ENCODE measurements at regions of chr10 and their contacts with region 1.

Region 1: GRCh38 chr10:13787015-13787421 is 200.3 kb downstream of the PRPF18 start:
- DNase-seq: peak in 2 of 10 donors; percentile 38 to 60
- H3K4me3 ChIP-seq: no peak overlapping the region
- H3K27ac ChIP-seq: peak overlapping the region in 24 of 59 donors; percentile 3 to 97 (median 60)
- H3K27me3 ChIP-seq: no peaks in the 10 kb centered on the region
- CTCF ChIP-seq: no peak

Region 2: GRCh38 chr10:12975266-12975665 is 811.8 kb before region 1 on chr10:
- intact Hi-C with region 1: no loop called
- DNase-seq: no peak
- H3K4me3 ChIP-seq: no peak overlapping the region
- H3K27ac ChIP-seq: peak overlapping the region in 1 of 59 donors; percentile 21
- H3K27me3 ChIP-seq: no peaks in the 10 kb centered on the region
- CTCF ChIP-seq: peak in 8 of 56 donors; percentile 6 to 27 (median 18)

Region 3: GRCh38 chr10:13707156-13707881 is 79.7 kb before region 1 on chr10:
- intact Hi-C with region 1: no loop called
- DNase-seq: peak in 8 of 10 donors; percentile 47 to 76 (median 66)
- H3K4me3 ChIP-seq: peak overlapping the region; percentile 21 to 69 (median 54)
- H3K27ac ChIP-seq: peak overlapping the region in 58 of 59 donors; percentile 17 to 87 (median 70)
- H3K27me3 ChIP-seq: no peaks in the 10 kb centered on the region
- CTCF ChIP-seq: peak in 1 of 56 donors; percentile 5

Region 4: GRCh38 chr10:13765641-13766341 is 21.2 kb before region 1 on chr10:
- intact Hi-C with region 1: no loop called
- DNase-seq: no peak
- H3K4me3 ChIP-seq: no peak overlapping the region
- H3K27ac ChIP-seq: no peak overlapping the region
- H3K27me3 ChIP-seq: no peaks in the 10 kb centered on the region
- CTCF ChIP-seq: no peak

Region 5: DNA sequence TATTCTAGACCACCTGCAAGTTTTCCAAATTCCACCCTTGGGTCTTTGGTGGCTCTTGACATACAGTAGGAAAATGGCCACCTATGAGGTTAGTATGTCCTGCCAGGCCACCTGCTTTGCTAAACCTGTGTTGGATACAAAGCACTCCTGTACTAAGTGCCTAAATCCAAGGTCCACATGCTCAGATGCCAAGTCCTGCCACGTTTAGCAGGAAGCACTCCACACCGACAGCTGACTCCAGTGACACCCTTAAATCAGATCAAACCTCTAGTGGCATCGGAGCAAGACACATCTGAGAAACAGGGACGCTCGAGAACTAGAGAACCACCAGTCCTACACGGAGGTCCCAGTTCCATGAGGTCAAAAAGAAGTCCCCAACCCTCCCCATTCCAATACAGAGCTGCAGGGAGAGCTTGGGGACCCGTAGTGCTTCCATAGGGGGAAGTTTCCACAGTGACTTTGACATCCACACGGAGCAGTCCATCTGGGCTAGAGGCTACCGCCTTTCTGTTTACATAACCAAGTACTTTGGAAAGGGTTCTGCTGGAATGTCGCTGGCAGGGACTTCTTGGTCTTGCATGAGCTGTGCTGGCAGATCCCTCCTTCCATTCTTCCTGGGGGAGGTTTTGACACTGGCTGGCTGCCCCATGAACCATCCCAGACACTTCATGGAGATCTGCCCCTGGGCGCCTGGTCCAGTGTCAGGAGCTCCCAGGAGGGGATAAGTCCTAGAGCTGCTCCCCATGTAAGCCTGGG is 90.3 kb after region 1 on chr10:
- intact Hi-C with region 1: loop called in 1 of 2 experiments (anchors 10 kb)
- DNase-seq: no peak
- H3K4me3 ChIP-seq: no peak overlapping the region
- H3K27ac ChIP-seq: peak overlapping the region in 24 of 59 donors; percentile 9 to 71 (median 37)
- H3K27me3 ChIP-seq: no peaks in the 10 kb centered on the region
- CTCF ChIP-seq: no peak

Region 6: DNA sequence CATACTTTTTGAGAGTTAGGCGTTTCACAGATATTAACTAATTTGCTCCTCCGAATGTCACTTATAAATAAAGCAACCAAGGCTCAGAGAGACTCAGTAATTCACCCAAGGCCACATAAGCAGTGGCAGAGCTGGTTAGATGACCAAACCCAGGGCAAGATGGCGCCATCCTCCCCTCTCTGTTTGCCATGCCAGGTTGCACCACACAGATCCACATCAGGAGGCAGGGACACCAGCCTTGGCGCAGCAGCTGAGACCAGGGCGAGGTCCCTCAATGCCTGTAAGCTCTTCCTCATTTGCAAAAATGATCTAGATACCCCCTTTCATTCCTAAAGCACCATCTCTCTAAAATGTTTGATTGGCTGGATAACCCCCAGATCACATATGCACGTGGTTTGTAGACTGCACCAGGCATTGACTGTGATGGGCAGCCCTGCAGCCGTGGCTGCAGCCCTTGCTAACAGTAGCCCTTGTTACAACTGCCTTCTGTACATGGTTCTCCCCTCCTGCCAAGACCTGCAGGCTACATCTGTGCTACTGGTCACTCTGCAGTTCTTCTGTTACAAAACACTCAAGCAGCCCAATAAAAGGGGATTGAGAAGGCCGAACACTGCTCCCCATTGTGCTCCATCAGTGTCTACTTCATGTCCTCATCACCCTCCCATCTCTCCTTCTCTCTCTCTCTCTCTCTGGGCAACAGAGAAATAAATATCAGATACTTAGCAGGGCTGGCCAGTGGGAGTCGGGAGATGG is 98.4 kb after region 1 on chr10:
- intact Hi-C with region 1: loop called in 1 of 2 experiments (anchors 5 kb)
- DNase-seq: peak in 9 of 10 donors; percentile 48 to 92 (median 77)
- H3K4me3 ChIP-seq: peak overlapping the region in 24 of 59 donors; percentile 4 to 39 (median 16)
- H3K27ac ChIP-seq: peak overlapping the region in 55 of 59 donors; percentile 5 to 89 (median 70)
- H3K27me3 ChIP-seq: peaks cover 0 to 11% (median 0%) of the 10 kb centered on the region in 45 donors
- CTCF ChIP-seq: peak in 11 of 56 donors; percentile 1 to 24 (median 11)

Region 7: DNA sequence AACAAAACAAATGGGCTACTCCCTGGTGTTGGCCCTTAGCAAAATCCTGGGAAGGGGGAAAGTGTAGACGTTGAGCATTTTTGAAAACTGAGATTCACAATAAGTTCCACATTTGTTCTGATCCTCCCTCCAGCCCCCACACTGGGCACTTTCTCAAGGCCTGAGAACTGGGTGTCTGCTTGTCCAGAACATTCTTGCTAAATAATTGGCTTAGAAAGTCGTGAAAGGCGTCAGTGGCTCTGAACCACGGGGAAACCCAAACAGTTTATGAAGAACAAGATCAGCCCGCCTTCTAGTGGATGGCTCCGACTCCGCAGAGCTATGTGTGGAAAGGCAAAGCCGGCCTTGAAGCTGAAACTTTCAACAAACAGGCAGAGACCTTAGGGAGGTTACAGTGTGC is 169.8 kb after region 1 on chr10:
- intact Hi-C with region 1: loop called in 1 of 2 experiments (anchors 5 kb)
- DNase-seq: peak in 3 of 10 donors; percentile 18 to 42 (median 42)
- H3K4me3 ChIP-seq: no peak overlapping the region
- H3K27ac ChIP-seq: peak overlapping the region in 17 of 59 donors; percentile 7 to 67 (median 27)
- H3K27me3 ChIP-seq: peaks cover 0 to 7% (median 0%) of the 10 kb centered on the region in 45 donors
- CTCF ChIP-seq: peak in 48 of 56 donors; percentile 7 to 60 (median 38)

Region 8: GRCh38 chr10:14093730-14094484 is 306.9 kb after region 1 on chr10:
- intact Hi-C with region 1: loop called (anchors 1 to 2 kb)
- DNase-seq: no peak
- H3K4me3 ChIP-seq: no peak overlapping the region
- H3K27ac ChIP-seq: peak overlapping the region in 8 of 59 donors; percentile 1 to 46 (median 21)
- H3K27me3 ChIP-seq: no peaks in the 10 kb centered on the region
- CTCF ChIP-seq: peak; percentile 26 to 74 (median 58)

Region 9: GRCh38 chr10:14191871-14192270 is 404.9 kb after region 1 on chr10:
- intact Hi-C with region 1: no loop called
- DNase-seq: no peak
- H3K4me3 ChIP-seq: no peak overlapping the region
- H3K27ac ChIP-seq: no peak overlapping the region
- H3K27me3 ChIP-seq: peaks cover 0 to 4% (median 0%) of the 10 kb centered on the region in 45 donors
- CTCF ChIP-seq: no peak

Region 10: GRCh38 chr10:14478604-14479003 is 691.6 kb after region 1 on chr10:
- intact Hi-C with region 1: loop called (anchors 5 kb)
- DNase-seq: peak; percentile 46 to 88 (median 80)
- H3K4me3 ChIP-seq: peak overlapping the region in 11 of 59 donors; percentile 1 to 37 (median 10)
- H3K27ac ChIP-seq: peak overlapping the region in 29 of 59 donors; percentile 5 to 97 (median 44)
- H3K27me3 ChIP-seq: no peaks in the 10 kb centered on the region
- CTCF ChIP-seq: peak; percentile 46 to 94 (median 84)